ENCODE measurements at regions of chr3 and their contacts with region 1.

Region 1: GRCh38 chr3:64815195-64815631 is 127.4 kb upstream of the ADAMTS9 start:
- DNase-seq: no peak
- ATAC-seq: no peak
- H3K4me3 ChIP-seq: no peak overlapping the region
- H3K27ac ChIP-seq: no peak overlapping the region
- H3K4me1 ChIP-seq: no peaks in the 10 kb centered on the region
- H3K27me3 ChIP-seq: peaks cover 14% of the 10 kb centered on the region; the same call in 1 of the 2 replicates
- CTCF ChIP-seq: no peak
- POLR2A ChIP-seq: no peak
- RAD21 ChIP-seq: no peak

Region 2: GRCh38 chr3:64759811-64760210 is 55.4 kb before region 1 on chr3:
- CTCF ChIA-PET with region 1: no interaction called
- POLR2A ChIA-PET with region 1: interaction called, 4 read pairs
- RAD21 ChIA-PET with region 1: no interaction called
- intact Hi-C with region 1: loop called (anchors 10 kb)
- DNase-seq: no peak
- ATAC-seq: no peak
- H3K4me3 ChIP-seq: no peak overlapping the region
- H3K27ac ChIP-seq: no peak overlapping the region
- H3K4me1 ChIP-seq: no peaks in the 10 kb centered on the region
- H3K27me3 ChIP-seq: peaks cover 8% of the 10 kb centered on the region
- CTCF ChIP-seq: no peak
- POLR2A ChIP-seq: no peak
- RAD21 ChIP-seq: no peak

Measured in HCT116 (cell line).